ENCODE measurements at regions of chr3 and their contacts with region 1.

Region 1: DNA sequence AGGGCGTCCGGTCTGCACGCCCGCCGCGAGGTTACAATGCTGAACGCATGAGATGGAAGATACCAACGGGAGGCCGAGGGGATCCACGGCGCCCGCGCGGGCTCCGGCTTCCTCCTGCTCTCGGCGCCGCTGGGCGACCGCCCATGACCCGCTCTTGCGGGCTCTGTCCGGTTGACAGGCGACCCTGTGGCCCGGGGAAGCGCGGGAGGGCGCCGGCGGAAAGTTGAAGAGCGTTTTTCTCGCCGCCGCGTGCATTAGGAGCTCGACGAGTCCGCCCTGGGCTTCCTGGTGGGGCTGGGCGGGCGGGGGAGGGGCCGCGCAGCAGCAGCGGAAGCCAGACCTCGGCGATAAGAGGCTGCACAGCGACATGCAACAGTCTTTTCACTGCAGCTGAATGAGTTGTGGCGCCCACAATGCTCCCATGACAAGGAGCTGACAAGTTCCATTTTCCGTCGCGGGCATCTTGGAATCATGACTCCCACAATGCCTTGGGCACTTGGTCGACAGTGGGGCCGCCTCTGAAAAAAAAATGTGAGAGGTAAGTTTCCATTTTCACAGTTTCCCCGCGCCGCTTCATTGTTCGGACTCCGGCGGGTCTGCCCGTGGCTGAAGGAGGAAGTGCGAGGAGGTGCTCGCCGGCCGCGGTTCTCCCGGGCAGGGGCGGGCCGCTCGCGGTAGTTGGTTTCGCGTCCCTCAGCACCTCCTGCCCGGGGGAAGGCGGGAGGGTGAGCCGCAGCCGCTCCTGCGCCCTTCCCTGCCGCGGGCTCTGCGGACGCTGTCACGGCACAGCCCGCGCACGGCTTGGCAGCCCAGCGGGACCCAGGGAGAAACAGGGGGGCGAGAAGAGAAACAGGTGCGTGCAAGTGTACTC is at the start of gene MBNL1:
- DNase-seq: peak; percentile 73 to 78
- ATAC-seq: peak; percentile 26
- H3K4me3 ChIP-seq: peak within 1 kb of the TSS; percentile 77 to 87 (median 86)
- H3K27ac ChIP-seq: peak within 1 kb of the TSS; percentile 96 to 99 (median 97)
- H3K4me1 ChIP-seq: peaks cover 49 to 57% of the 10 kb centered on the region in 2 donors
- H3K27me3 ChIP-seq: no peaks in the 10 kb centered on the region
- CTCF ChIP-seq: peak in 2 of 5 experiments; percentile 10 to 16
- POLR2A ChIP-seq: peak in 1 of 2 donors; percentile 86
- total RNA-seq, gene MBNL1: 519 to 597 (median 557) TPM

Region 2: DNA sequence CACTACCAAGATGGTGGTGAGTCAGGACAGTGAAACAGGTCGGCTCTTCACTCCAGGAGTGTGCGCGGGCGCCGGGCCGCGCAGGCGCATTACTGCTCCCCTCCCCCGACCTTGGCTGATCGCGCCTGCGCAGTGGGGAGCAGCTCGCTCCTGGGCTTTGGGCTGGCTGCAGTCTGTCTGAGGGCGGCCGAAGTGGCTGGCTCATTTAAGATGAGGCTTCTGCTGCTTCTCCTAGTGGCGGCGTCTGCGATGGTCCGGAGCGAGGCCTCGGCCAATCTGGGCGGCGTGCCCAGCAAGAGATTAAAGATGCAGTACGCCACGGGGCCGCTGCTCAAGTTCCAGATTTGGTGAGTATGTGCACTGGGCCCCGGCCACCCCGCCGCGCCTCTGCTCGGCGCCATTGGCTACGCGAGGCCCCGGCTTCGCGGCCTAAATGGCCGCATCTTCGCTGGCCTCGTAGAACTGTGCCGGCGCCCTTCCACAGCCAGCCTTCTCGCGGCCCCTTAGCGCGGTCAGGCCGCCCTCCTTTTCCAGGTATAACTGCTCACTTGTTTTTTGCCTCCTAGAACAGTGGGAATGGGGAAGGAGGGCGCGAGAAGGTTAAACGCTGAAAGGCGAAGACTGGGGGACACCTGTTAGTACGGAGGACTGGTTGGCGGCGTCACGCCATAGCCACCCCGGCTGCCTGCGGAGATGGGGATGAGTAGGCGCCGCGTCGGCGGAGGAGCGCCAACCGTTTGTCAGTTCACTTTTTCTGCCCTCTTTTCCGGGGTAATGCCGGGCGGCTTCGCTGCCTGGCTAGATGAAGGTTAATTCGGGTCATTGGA is 1665.4 kb before region 1 on chr3 and contains the start of gene SELENOT:
- in situ Hi-C with region 1: no loop called
- intact Hi-C with region 1: loop called (anchors 5 kb)
- DNase-seq: peak; percentile 88 to 95
- ATAC-seq: peak; percentile 94 to 96
- H3K4me3 ChIP-seq: peak within 1 kb of the TSS; percentile 75 to 95 (median 86)
- H3K27ac ChIP-seq: peak within 1 kb of the TSS; percentile 93 to 98 (median 96)
- H3K4me1 ChIP-seq: peaks cover 41 to 50% of the 10 kb centered on the region in 2 donors
- H3K27me3 ChIP-seq: no peaks in the 10 kb centered on the region
- CTCF ChIP-seq: peak; percentile 27 to 58 (median 49)
- POLR2A ChIP-seq: peak; percentile 93
- total RNA-seq, gene SELENOT: 69.6 to 83.1 (median 76.2) TPM

Region 3: GRCh38 chr3:152071924-152072323 is 196.9 kb before region 1 on chr3:
- in situ Hi-C with region 1: no loop called
- intact Hi-C with region 1: loop called (anchors 10 kb)
- DNase-seq: no peak
- ATAC-seq: peak; percentile 60 to 83
- H3K4me3 ChIP-seq: no peak overlapping the region
- H3K27ac ChIP-seq: no peak overlapping the region
- H3K4me1 ChIP-seq: peaks cover 3 to 8% of the 10 kb centered on the region in 2 donors
- H3K27me3 ChIP-seq: no peaks in the 10 kb centered on the region
- CTCF ChIP-seq: peak; percentile 29 to 55 (median 39)
- POLR2A ChIP-seq: no peak

Region 4: DNA sequence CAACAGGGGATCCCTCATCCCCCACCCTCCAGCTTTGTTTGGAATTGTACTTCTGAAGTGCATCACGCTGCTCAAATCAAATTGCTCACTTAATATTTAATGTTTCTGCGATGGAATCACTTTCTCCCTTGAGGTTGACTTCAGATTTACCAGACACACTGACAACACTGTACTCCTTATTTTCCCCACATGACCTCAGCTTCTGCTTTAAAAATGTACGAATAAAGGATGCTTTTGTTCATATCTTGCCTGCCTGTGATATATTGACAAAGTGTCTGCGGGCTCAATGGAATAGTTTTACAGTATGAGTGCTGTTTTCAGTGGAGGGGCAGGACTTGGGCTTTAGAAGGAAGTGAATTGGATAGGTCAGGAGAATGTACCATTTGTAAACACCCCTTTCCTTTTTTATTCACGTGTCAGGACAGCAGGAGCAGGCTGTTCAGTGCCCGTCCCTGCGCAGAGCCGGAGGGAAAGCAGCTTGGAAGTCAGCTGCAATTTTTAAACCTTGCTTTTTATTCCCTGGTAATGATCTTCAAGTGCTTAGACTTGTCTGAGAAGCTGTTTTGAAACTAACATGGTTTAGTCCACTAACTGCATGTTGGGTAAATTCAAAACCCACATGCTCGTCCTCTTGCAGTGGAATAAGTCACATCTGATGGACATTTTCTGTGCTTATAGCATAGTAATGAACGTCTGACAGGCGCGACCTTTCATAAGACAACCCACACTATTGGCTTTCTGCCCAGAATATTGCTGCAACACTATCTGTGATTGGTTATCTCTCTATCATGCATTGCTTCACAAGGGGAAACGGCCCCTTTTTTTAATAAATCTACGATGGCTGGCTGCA is 29.8 kb after region 1 on chr3:
- in situ Hi-C with region 1: no loop called
- intact Hi-C with region 1: loop called (anchors 2 kb)
- DNase-seq: peak; percentile 77 to 82
- ATAC-seq: peak; percentile 74 to 76
- H3K4me3 ChIP-seq: peak overlapping the region; percentile 44 to 67 (median 55)
- H3K27ac ChIP-seq: peak overlapping the region; percentile 85 to 92 (median 88)
- H3K4me1 ChIP-seq: peaks cover 47 to 49% of the 10 kb centered on the region in 2 donors
- H3K27me3 ChIP-seq: no peaks in the 10 kb centered on the region
- CTCF ChIP-seq: no peak
- POLR2A ChIP-seq: peak; percentile 43 to 79

Region 5: GRCh38 chr3:152319831-152320617 is 51.2 kb after region 1 on chr3:
- in situ Hi-C with region 1: no loop called
- intact Hi-C with region 1: loop called (anchors 5 kb)
- DNase-seq: no peak
- ATAC-seq: peak in 1 of 2 donors; percentile 14
- H3K4me3 ChIP-seq: peak overlapping the region; percentile 3 to 21 (median 14)
- H3K27ac ChIP-seq: peak overlapping the region; percentile 75 to 95 (median 92)
- H3K4me1 ChIP-seq: peaks cover 93 to 96% of the 10 kb centered on the region in 2 donors
- H3K27me3 ChIP-seq: no peaks in the 10 kb centered on the region
- CTCF ChIP-seq: no peak
- POLR2A ChIP-seq: no peak

Region 6: GRCh38 chr3:152405915-152406802 is 137.4 kb after region 1 on chr3:
- in situ Hi-C with region 1: no loop called
- intact Hi-C with region 1: loop called (anchors 2 kb)
- DNase-seq: peak in 1 of 2 donors; percentile 56
- ATAC-seq: peak; percentile 63 to 69
- H3K4me3 ChIP-seq: peak overlapping the region; percentile 35 to 47 (median 43)
- H3K27ac ChIP-seq: peak overlapping the region; percentile 92 to 96 (median 94)
- H3K4me1 ChIP-seq: peaks cover 77 to 94% of the 10 kb centered on the region in 2 donors
- H3K27me3 ChIP-seq: no peaks in the 10 kb centered on the region
- CTCF ChIP-seq: no peak
- POLR2A ChIP-seq: peak in 1 of 2 donors; percentile 33

Region 7: DNA sequence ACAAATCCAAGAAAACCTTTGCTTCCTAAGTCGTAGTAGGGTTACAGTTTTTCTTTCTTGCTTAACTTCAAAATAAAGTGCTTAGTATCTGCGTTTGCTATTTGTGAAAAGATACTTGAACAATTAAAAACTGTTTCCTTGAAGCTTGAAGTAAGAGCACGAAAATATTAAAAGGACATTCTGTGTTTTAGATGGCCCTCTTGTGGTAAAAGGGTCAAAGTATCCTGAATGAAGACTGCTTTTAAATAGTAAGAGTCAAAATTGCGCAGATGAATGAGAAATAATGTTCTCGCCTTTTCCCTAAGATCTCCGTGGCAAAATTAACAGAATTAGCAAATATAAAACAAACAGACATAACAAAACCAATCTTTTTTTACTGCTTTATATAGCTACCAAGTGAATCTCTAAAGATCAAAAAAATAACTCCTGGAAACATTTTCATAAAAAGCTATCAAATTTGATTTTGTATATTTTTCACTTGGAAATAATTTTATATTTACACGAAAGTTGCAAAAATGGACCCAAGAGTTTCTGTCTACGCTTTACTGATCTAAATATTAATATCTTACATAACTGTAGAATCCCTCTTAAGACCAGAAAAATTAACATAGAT is 175.3 kb after region 1 on chr3:
- in situ Hi-C with region 1: loop called in 2 of 4 experiments (anchors 10 to 25 kb)
- intact Hi-C with region 1: loop called (anchors 2 kb)
- DNase-seq: no peak
- ATAC-seq: peak; percentile 51 to 56
- H3K4me3 ChIP-seq: peak overlapping the region in 1 of 4 donors; percentile 19
- H3K27ac ChIP-seq: peak overlapping the region; percentile 53 to 71 (median 62)
- H3K4me1 ChIP-seq: peaks cover 70 to 72% of the 10 kb centered on the region in 2 donors
- H3K27me3 ChIP-seq: no peaks in the 10 kb centered on the region
- CTCF ChIP-seq: peak; percentile 59 to 82 (median 68)
- POLR2A ChIP-seq: no peak

Measured in gastrocnemius medialis (tissue), 4 donors.